Activated CD4-positive, alpha-beta T cell treated with anti-CD3 and anti-CD28 coated beads for 36 hours (primary cell): ENCODE measurements at regions of chr6 and their contacts with region 1.

Region 1: GRCh38 chr6:37207903-37208456 is 38.0 kb downstream of the PIM1 start:
- DNase-seq: peak; percentile 95
- ATAC-seq: peak; percentile 73
- H3K4me3 Mint-ChIP-seq: no peak overlapping the region
- H3K27ac Mint-ChIP-seq: peak overlapping the region; percentile 53
- H3K4me1 Mint-ChIP-seq: peaks cover 67% of the 10 kb centered on the region
- H3K27me3 Mint-ChIP-seq: no peaks in the 10 kb centered on the region

Region 2: DNA sequence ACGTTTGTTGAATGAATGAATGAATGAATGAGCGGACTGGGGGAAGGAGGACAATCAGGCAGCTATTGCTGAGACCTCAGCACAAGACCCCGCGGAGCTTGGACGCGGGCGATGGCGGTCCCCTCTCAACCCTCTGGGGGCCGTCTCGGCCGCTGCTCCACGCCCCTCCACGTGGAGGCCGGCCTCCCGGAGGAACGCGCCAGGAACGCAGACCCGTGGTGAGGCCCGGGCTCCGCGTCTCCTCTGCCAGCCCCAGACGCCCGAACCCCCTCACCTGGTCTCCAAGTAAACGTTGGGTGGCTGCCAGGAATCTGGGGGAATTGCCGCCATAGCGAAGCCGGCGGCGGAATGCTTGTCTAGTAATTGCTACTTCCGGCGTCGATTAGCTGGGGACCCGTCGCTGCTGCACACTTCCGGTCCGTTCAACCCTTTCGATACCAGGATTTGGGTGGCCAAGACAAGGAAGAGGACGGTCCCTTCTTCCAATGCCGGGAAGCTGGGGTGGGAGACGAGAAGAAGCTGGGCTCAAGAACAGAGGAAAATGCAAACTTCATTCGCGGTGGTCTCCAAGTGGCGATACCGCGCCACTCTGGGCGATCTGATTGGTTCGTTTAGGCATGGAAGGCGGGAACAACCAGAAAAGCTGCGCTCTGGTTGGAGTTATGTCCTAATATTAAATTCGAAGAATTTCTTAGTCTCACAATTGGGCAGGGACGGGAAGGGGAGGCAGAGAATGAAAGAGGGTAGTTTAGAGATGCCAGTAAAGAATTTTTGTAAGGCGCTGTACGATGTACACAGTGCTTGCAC is 333.3 kb before region 1 on chr6 and contains the start of gene PPIL1:
- CTCF ChIA-PET with region 1: interaction called, 7 read pairs
- POLR2A ChIA-PET with region 1: no interaction called
- intact Hi-C with region 1: loop called in 1 of 2 experiments (anchors 5 kb)
- DNase-seq: peak; percentile 90
- ATAC-seq: peak; percentile 80
- H3K4me3 Mint-ChIP-seq: peak within 1 kb of the TSS; percentile 98
- H3K27ac Mint-ChIP-seq: peak within 1 kb of the TSS; percentile 99
- H3K4me1 Mint-ChIP-seq: peaks cover 45% of the 10 kb centered on the region
- H3K27me3 Mint-ChIP-seq: peaks cover 7% of the 10 kb centered on the region
- total RNA-seq, gene PPIL1: 45.9 to 46.0 TPM

Region 3: DNA sequence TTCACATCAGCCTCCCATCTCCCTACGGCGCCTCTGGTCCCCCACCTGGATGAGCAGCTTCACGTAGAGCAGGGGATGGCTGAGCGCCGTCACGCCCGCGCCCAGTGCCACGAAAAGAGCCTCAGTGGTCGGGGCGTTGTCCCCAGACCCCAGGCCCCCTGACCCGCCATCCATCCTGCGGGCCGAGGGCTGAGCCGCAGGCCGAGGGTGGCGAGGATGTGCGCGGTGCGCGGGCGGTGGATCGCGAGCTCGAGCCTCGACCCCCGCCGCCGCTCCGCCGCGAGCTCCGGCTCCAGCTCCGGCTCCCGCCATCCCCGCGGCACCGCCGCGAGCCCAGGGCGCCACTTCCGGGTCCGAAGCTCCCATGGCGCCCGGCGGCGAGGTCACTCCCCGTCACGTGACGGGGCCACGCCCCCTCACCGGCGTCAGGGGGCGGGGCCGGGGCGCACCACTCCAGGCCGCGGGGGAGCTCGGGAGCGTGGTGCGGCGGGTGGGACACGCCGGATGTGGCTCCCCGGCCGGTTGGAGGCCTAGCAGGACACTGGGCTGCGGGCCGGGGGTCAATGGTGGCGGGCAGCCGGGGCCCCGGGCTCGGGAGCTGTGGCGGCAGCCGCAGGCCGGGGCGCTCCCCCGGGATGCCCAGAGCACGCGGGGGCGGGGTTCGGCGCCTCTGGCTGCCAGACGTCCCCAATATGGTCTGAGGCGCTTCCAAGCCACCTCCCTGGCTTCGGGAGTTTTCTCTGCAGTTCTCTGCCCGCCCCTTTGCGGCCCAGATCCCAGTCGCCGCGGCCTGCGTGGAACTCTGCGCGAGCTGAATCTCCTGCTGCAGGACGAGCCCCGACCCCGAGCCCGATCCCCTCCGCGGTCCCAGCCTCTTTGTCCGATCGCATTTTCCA is 221.9 kb before region 1 on chr6 and contains the start of gene MTCH1:
- CTCF ChIA-PET with region 1: no interaction called
- POLR2A ChIA-PET with region 1: no interaction called
- intact Hi-C with region 1: loop called in 1 of 2 experiments (anchors 1 kb)
- DNase-seq: peak; percentile 93
- ATAC-seq: peak; percentile 80
- H3K4me3 Mint-ChIP-seq: no peak within 1 kb of the TSS
- H3K27ac Mint-ChIP-seq: peak within 1 kb of the TSS; percentile 95
- H3K4me1 Mint-ChIP-seq: peaks cover 18% of the 10 kb centered on the region
- H3K27me3 Mint-ChIP-seq: no peaks in the 10 kb centered on the region
- total RNA-seq, gene MTCH1: 72.9 to 92.9 TPM

Region 4: DNA sequence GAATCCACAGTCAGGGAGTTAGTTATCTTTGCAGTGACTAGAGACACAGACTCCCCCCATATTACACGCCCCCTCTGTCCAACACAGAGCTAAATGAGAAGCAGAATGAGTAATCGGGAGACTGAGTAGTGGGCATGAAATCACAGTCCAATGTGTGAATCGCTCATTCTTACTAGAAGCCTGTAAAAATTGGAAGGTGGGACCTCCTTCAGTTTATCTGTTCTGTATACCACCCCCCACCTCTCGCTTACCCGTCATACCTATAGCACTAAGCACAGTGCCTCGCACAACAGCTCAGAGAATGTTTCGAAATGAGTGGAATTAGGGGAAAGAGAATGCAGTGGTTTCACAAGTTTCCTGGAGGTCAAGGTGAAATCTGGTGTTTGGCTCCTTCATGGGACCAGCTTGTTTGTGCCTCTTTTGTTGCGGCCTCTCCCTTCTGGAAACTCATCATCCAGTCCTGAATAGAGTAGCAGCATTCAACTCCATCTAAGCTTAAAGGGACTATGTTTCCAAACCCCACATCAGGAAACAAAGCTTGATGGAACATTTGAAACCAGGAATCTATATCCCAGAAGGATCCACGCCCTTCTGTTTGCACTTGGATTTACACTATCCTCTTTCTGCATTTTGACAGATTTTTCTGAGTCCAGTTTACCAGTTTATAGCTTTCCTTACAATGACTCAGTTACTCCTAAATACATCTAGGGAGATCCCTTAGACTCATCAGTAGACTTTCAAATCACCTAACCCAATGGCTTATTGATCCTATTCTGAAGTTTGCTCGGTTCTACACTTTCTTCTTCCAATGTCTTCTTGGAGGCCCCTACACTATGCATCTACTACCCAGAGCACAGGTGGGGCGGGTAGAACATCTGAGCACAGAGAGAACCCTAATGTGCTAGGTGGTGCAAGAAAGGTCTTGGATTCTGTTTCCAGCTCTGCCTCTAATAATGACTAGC is 97.2 kb before region 1 on chr6:
- CTCF ChIA-PET with region 1: interaction called, 10 read pairs
- POLR2A ChIA-PET with region 1: no interaction called
- intact Hi-C with region 1: no loop called
- DNase-seq: peak; percentile 68
- ATAC-seq: peak; percentile 92
- H3K4me3 Mint-ChIP-seq: no peak overlapping the region
- H3K27ac Mint-ChIP-seq: peak overlapping the region; percentile 76
- H3K4me1 Mint-ChIP-seq: peaks cover 22% of the 10 kb centered on the region
- H3K27me3 Mint-ChIP-seq: no peaks in the 10 kb centered on the region

Region 5: GRCh38 chr6:37190159-37190535 is 17.8 kb before region 1 on chr6:
- CTCF ChIA-PET with region 1: interaction called, 22 read pairs
- POLR2A ChIA-PET with region 1: interaction called, 6 read pairs
- intact Hi-C with region 1: loop called (anchors 1 to 2 kb)
- DNase-seq: peak; percentile 62
- ATAC-seq: peak; percentile 75
- H3K4me3 Mint-ChIP-seq: no peak overlapping the region
- H3K27ac Mint-ChIP-seq: peak overlapping the region; percentile 3
- H3K4me1 Mint-ChIP-seq: peaks cover 71% of the 10 kb centered on the region
- H3K27me3 Mint-ChIP-seq: no peaks in the 10 kb centered on the region

Region 6: DNA sequence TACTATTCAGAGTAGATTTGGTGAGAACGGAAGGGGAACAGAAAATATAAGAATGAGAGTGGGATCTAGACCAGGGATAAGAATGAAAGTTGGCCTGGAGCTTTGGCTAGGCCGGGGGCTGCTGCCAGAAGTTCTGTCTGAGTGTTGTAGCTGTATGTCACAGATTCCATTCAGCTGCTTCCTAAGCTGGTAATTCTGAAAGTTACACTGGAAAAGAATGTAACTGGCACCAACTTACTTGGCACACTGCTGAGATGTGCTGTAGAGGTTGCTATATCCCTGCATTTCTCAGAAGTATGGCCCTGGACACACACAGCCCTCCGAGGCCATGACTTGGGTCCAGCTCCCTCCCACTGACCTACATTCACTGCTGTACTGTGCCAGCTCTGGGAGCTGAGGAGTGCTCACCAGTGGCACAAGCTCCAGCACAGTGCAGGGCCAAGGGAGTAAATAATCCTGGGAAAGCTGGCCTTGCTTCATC is 75.7 kb after region 1 on chr6:
- CTCF ChIA-PET with region 1: no interaction called
- POLR2A ChIA-PET with region 1: no interaction called
- intact Hi-C with region 1: no loop called
- DNase-seq: no peak
- ATAC-seq: no peak
- H3K4me3 Mint-ChIP-seq: no peak overlapping the region
- H3K27ac Mint-ChIP-seq: no peak overlapping the region
- H3K4me1 Mint-ChIP-seq: peaks cover 20% of the 10 kb centered on the region
- H3K27me3 Mint-ChIP-seq: no peaks in the 10 kb centered on the region

Region 7: DNA sequence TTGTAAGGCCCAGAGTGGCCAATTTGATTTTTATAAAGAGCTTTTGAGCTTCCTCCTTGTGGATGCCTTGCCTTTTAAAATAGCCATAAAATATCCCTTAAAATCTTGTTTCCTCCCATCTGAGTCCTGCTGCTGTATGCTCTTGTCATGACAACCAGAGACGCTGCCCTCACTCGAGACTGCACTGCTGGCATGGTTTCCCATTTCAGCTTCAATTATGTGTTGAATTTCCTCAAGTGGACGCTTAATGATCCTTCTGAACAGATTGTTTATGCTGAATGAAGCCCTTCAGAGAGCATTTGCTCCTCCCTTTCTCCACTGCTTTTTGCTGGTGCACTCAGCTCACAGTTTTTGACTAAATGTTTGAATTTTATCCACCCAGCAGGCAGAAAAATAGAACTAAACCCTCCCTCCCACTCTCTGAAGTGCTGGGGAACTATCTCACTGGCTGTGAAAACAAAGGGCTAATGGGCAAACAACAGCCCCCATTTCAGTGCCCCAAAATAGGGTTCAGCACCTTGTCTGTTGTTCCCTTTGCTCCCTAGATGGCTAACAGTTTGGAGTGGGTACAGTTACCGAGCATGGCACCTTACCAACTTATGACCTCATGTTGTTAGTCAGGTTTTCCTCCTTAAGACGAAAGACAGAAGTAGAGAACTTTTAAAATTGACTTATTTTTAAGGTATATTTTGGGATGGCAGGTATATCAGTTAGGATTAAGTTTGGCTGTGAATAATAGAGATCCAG is 100.3 kb after region 1 on chr6:
- CTCF ChIA-PET with region 1: no interaction called
- POLR2A ChIA-PET with region 1: no interaction called
- intact Hi-C with region 1: no loop called
- DNase-seq: no peak
- ATAC-seq: no peak
- H3K4me3 Mint-ChIP-seq: no peak overlapping the region
- H3K27ac Mint-ChIP-seq: no peak overlapping the region
- H3K4me1 Mint-ChIP-seq: peaks cover 2% of the 10 kb centered on the region
- H3K27me3 Mint-ChIP-seq: no peaks in the 10 kb centered on the region